Transverse colon (tissue), 4 donors: ENCODE measurements at regions of chr7 and their contacts with region 1.

Region 1: GRCh38 chr7:6545398-6546126 is 5.7 kb downstream of the GRID2IP start:
- DNase-seq: no peak
- H3K4me3 ChIP-seq: no peak overlapping the region
- H3K27ac ChIP-seq: no peak overlapping the region
- H3K4me1 ChIP-seq: no peaks in the 10 kb centered on the region
- H3K27me3 ChIP-seq: no peaks in the 10 kb centered on the region
- CTCF ChIP-seq: no peak
- EP300 ChIP-seq: no peak
- POLR2A ChIP-seq: no peak

Region 2: DNA sequence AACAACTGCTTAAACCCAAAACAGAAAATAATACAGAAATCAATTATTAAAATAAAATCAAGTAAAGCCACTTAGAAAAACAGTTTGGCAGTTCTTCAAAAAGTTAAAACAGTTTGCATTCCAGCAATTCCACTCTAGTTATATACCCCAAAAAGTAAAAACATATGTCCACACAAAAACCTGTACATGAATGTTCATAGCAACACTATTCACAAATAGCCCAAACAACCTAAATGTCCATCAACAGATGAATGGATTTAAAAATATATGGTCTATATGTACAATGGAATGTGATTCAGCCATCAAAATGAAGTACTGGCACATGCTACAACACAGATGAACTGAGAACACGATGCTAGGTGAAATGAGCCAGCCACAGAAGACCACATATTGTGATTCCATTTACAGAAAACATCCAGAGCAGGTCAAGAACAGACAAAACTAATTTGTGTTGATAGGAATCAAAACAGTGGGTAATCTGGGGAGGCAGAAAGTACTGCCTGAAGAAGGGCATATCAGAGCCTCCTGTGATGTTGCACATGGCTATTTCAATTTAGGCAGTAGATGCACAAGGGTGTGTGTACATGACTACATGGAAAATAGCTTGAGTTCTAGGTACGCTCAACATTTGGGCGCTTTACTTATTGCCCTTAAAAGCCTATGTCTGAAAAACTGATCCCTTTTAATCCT is 339.4 kb before region 1 on chr7:
- in situ Hi-C with region 1: no loop called
- intact Hi-C with region 1: loop called (anchors 10 kb)
- DNase-seq: no peak
- H3K4me3 ChIP-seq: no peak overlapping the region
- H3K27ac ChIP-seq: no peak overlapping the region
- H3K4me1 ChIP-seq: peaks cover 0 to 16% (median 3%) of the 10 kb centered on the region in 4 donors
- H3K27me3 ChIP-seq: no peaks in the 10 kb centered on the region
- CTCF ChIP-seq: no peak
- EP300 ChIP-seq: no peak
- POLR2A ChIP-seq: no peak

Region 3: GRCh38 chr7:6571160-6571779 is 25.7 kb after region 1 on chr7:
- in situ Hi-C with region 1: no loop called
- intact Hi-C with region 1: no loop called
- DNase-seq: no peak
- H3K4me3 ChIP-seq: no peak overlapping the region
- H3K27ac ChIP-seq: no peak overlapping the region
- H3K4me1 ChIP-seq: no peaks in the 10 kb centered on the region
- H3K27me3 ChIP-seq: no peaks in the 10 kb centered on the region
- CTCF ChIP-seq: no peak
- EP300 ChIP-seq: no peak
- POLR2A ChIP-seq: no peak

Region 4: GRCh38 chr7:7148798-7149481 is 603.4 kb after region 1 on chr7:
- in situ Hi-C with region 1: no loop called
- intact Hi-C with region 1: no loop called
- DNase-seq: no peak
- H3K4me3 ChIP-seq: no peak overlapping the region
- H3K27ac ChIP-seq: no peak overlapping the region
- H3K4me1 ChIP-seq: no peaks in the 10 kb centered on the region
- H3K27me3 ChIP-seq: no peaks in the 10 kb centered on the region
- CTCF ChIP-seq: no peak
- EP300 ChIP-seq: no peak
- POLR2A ChIP-seq: no peak